Caco-2 (cell line): ENCODE measurements at regions of chr6 and their contacts with region 1.

Region 1: GRCh38 chr6:64012351-64013001 is 376.9 kb downstream of the PHF3 start:
- DNase-seq: peak; percentile 50 to 64
- H3K4me3 ChIP-seq: no peak overlapping the region
- H3K4me3 Mint-ChIP-seq: no peak overlapping the region
- H3K27ac Mint-ChIP-seq: no peak overlapping the region
- H3K4me1 ChIP-seq: 0 out of 2 replicates have a peak, but pooled peaks cover 5% of the 10 kb centered on the region
- H3K4me1 Mint-ChIP-seq: no peaks in the 10 kb centered on the region
- H3K27me3 ChIP-seq: no peaks in the 10 kb centered on the region
- H3K27me3 Mint-ChIP-seq: no peaks in the 10 kb centered on the region
- CTCF ChIP-seq: peak; percentile 74 to 88

Region 2: DNA sequence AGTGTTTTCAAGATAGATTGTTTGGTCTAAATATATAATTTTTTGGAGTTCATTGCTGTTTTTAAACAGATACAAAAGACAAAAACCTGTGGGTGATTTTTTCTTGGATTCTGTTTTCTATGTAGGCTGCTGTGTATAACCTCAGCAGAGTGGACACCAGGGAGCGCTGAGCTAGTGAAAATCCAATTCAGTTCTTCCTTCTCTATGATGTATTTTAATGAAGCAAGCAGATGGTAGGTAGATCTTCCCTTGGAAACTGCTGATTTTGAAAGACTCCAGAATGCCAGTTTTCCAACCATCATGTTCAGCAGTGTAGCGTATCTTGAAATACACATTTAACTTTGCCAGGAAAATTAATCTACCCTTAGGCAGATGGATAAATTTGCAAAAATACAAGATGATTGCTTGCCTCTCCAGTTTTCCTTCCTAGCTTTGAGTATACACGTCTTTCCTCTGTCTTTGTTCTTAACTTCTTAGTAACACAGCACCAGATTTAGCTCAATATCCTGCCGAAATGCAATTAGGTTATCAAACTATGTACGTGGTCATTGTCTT is 198.8 kb before region 1 on chr6:
- CTCF ChIA-PET with region 1: no interaction called
- POLR2A ChIA-PET with region 1: no interaction called
- intact Hi-C with region 1: no loop called
- DNase-seq: no peak
- H3K4me3 ChIP-seq: no peak overlapping the region
- H3K4me3 Mint-ChIP-seq: no peak overlapping the region
- H3K27ac Mint-ChIP-seq: no peak overlapping the region
- H3K4me1 ChIP-seq: no peaks in the 10 kb centered on the region
- H3K4me1 Mint-ChIP-seq: no peaks in the 10 kb centered on the region
- H3K27me3 ChIP-seq: 0 out of 2 replicates have a peak, but pooled peaks cover 2% of the 10 kb centered on the region
- H3K27me3 Mint-ChIP-seq: no peaks in the 10 kb centered on the region
- CTCF ChIP-seq: no peak

Region 3: DNA sequence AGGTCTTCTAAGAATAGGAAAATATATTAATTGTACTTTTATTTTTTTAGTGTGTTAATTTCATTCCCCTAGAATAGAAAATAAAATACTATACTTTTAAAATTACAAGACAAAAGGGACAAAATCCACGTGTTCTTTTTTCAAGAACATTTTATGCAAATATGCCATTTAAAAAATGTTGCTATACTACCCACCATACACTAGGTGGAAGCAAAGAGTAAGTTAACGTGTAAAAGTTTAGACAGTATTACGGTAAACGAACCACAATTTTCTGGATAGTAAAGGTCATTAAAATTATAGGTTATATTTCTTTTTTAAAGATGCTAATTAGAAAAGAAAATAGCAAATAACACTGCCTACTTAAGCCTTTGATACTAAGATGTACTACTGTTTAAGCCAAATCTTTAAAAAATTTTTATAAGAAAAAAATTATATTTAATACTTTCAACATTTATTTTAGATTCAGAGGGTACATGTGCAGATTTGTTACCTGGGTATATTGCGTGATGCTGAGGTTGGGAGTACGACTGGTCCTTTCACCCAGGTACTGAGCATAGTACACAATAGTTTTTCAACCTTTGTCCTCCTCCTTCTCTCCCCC is 89.2 kb before region 1 on chr6:
- CTCF ChIA-PET with region 1: no interaction called
- POLR2A ChIA-PET with region 1: no interaction called
- intact Hi-C with region 1: loop called (anchors 1 kb)
- DNase-seq: peak in 1 of 2 experiments; percentile 6
- H3K4me3 ChIP-seq: no peak overlapping the region
- H3K4me3 Mint-ChIP-seq: no peak overlapping the region
- H3K27ac Mint-ChIP-seq: no peak overlapping the region
- H3K4me1 ChIP-seq: no peaks in the 10 kb centered on the region
- H3K4me1 Mint-ChIP-seq: no peaks in the 10 kb centered on the region
- H3K27me3 ChIP-seq: no peaks in the 10 kb centered on the region
- H3K27me3 Mint-ChIP-seq: peaks cover 8% of the 10 kb centered on the region
- CTCF ChIP-seq: peak in 1 of 2 experiments; percentile 50

Region 4: GRCh38 chr6:63968650-63969049 is 43.8 kb before region 1 on chr6:
- CTCF ChIA-PET with region 1: no interaction called
- POLR2A ChIA-PET with region 1: no interaction called
- intact Hi-C with region 1: no loop called
- DNase-seq: no peak
- H3K4me3 ChIP-seq: no peak overlapping the region
- H3K4me3 Mint-ChIP-seq: no peak overlapping the region
- H3K27ac Mint-ChIP-seq: no peak overlapping the region
- H3K4me1 ChIP-seq: no peaks in the 10 kb centered on the region
- H3K4me1 Mint-ChIP-seq: no peaks in the 10 kb centered on the region
- H3K27me3 ChIP-seq: no peaks in the 10 kb centered on the region
- H3K27me3 Mint-ChIP-seq: no peaks in the 10 kb centered on the region
- CTCF ChIP-seq: no peak

Region 5: DNA sequence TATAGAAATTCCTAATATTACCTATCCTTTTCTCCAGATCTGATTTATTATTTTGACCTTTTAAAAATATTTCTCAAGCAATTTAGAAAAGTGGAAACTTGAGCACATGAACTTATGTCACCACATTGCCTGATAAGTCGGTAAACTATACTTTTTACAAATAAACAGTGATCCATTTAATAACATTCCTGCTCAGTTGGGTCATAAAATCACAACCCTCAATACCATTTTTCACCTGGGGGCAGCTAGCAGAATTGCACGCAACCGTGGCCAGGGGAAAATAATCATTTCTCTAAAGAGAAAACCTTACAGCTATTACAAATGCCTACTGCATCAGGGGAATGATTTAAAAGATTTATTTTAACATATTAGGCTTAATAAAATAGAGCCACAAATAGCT is 237.7 kb after region 1 on chr6:
- CTCF ChIA-PET with region 1: no interaction called
- POLR2A ChIA-PET with region 1: no interaction called
- intact Hi-C with region 1: loop called (anchors 10 kb)
- DNase-seq: no peak
- H3K4me3 ChIP-seq: no peak overlapping the region
- H3K4me3 Mint-ChIP-seq: no peak overlapping the region
- H3K27ac Mint-ChIP-seq: no peak overlapping the region
- H3K4me1 ChIP-seq: peaks cover 27% of the 10 kb centered on the region
- H3K4me1 Mint-ChIP-seq: peaks cover 37% of the 10 kb centered on the region
- H3K27me3 ChIP-seq: no peaks in the 10 kb centered on the region
- H3K27me3 Mint-ChIP-seq: no peaks in the 10 kb centered on the region
- CTCF ChIP-seq: no peak

Region 6: GRCh38 chr6:64280569-64280968 is 268.1 kb after region 1 on chr6:
- CTCF ChIA-PET with region 1: interaction called, 3 read pairs
- POLR2A ChIA-PET with region 1: no interaction called
- intact Hi-C with region 1: loop called (anchors 1 kb)
- DNase-seq: peak in 1 of 2 experiments; percentile 45
- H3K4me3 ChIP-seq: no peak overlapping the region
- H3K4me3 Mint-ChIP-seq: no peak overlapping the region
- H3K27ac Mint-ChIP-seq: no peak overlapping the region
- H3K4me1 ChIP-seq: no peaks in the 10 kb centered on the region
- H3K4me1 Mint-ChIP-seq: peaks cover 7% of the 10 kb centered on the region
- H3K27me3 ChIP-seq: no peaks in the 10 kb centered on the region
- H3K27me3 Mint-ChIP-seq: no peaks in the 10 kb centered on the region
- CTCF ChIP-seq: peak; percentile 48 to 55

Region 7: DNA sequence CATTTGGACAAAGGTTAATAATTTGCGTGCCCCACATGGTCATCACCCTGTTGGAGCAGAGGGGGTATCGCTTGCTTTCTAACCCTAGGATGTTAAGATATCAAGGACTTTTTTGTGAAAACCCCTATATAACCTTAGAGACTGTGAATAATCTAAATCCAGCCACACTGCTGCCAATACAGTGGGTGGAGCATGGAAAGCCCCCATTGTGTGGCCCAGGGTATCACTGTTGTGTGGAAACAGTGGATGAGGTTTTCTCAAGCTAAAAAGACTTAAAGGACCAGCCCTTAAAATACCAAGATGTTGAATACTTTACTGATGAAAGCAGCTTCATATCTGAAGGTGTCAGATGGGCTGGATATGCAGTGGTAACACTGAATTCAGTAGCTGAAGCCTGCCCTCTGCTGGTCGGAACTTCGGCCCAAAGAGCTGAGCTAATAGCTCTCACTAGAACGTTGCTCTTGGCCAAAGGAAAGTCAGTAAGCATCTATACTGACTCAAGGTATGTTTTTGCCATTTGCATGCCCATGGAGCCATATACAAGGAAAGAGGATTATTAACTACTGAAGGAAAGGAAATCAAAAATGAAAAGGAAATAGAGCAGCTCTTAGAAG is 318.3 kb after region 1 on chr6:
- CTCF ChIA-PET with region 1: interaction called, 46 read pairs
- POLR2A ChIA-PET with region 1: no interaction called
- intact Hi-C with region 1: loop called (anchors 1 kb)
- DNase-seq: peak; percentile 80 to 84
- H3K4me3 ChIP-seq: no peak overlapping the region
- H3K4me3 Mint-ChIP-seq: no peak overlapping the region
- H3K27ac Mint-ChIP-seq: no peak overlapping the region
- H3K4me1 ChIP-seq: no peaks in the 10 kb centered on the region; the same call in 1 of the 2 replicates
- H3K4me1 Mint-ChIP-seq: peaks cover 6% of the 10 kb centered on the region
- H3K27me3 ChIP-seq: no peaks in the 10 kb centered on the region
- H3K27me3 Mint-ChIP-seq: no peaks in the 10 kb centered on the region
- CTCF ChIP-seq: peak; percentile 70 to 78

Region 8: GRCh38 chr6:64505312-64505711 is 492.8 kb after region 1 on chr6:
- CTCF ChIA-PET with region 1: no interaction called
- POLR2A ChIA-PET with region 1: no interaction called
- intact Hi-C with region 1: loop called (anchors 1 kb)
- DNase-seq: peak; percentile 36 to 52
- H3K4me3 ChIP-seq: no peak overlapping the region
- H3K4me3 Mint-ChIP-seq: no peak overlapping the region
- H3K27ac Mint-ChIP-seq: no peak overlapping the region
- H3K4me1 ChIP-seq: 0 out of 2 replicates have a peak, but pooled peaks cover 4% of the 10 kb centered on the region
- H3K4me1 Mint-ChIP-seq: no peaks in the 10 kb centered on the region
- H3K27me3 ChIP-seq: no peaks in the 10 kb centered on the region
- H3K27me3 Mint-ChIP-seq: no peaks in the 10 kb centered on the region
- CTCF ChIP-seq: peak; percentile 52 to 55